ENCODE measurements at regions of chr2 and their contacts with region 1.

Region 1: DNA sequence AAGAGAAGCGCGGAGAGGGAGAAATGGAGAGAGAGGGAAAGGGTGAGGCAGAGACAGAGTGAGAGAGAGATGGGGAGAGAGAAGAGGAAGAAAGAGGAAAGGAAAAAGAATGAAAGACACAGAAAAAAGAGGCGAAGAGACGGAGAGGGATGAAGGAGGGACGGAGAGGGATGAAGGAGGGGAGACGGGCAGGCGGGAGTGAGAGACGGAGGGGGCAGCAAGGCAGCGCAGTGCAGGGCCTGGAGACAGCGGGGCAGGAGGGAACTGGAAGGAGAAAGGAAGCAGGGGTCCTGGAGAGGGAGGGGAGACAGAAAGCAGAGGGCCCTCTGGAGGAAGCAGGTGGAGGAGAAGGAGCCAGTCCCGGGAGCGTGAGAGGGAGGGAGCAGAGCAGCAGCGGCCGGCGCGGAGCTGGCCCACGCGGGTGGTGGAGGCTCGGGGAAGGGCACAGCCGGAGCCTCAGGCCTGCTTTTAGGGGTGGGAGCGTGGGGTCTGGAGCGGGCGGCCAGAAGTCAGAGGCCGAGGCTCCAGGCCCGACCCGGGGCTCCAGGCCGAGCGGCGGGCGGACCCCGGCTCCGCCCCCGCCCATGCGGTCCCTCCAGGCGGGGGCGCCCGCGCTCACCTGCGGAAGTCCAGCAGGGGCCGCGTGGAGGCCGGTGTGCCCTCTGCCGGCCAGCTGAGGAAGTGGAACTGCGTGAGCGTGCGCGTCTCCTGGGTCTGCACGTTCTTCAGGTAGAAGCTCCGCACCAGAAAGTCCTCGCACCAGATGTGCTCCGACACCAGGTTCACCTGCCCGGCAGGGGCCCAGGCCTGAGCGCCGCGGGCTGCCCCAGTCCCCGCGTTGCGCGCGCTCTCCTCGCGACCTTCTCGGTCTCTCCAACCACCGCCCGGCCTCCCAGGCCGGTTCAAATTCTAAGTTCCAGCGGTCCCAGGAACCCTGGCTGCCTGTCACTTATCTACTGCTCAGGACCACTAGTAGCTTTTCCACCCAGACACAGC is 14.5 kb downstream of the PTPRN start:
- DNase-seq: no peak
- H3K4me3 ChIP-seq: peak overlapping the region; percentile 59
- CTCF ChIP-seq: peak; percentile 96

Region 2: DNA sequence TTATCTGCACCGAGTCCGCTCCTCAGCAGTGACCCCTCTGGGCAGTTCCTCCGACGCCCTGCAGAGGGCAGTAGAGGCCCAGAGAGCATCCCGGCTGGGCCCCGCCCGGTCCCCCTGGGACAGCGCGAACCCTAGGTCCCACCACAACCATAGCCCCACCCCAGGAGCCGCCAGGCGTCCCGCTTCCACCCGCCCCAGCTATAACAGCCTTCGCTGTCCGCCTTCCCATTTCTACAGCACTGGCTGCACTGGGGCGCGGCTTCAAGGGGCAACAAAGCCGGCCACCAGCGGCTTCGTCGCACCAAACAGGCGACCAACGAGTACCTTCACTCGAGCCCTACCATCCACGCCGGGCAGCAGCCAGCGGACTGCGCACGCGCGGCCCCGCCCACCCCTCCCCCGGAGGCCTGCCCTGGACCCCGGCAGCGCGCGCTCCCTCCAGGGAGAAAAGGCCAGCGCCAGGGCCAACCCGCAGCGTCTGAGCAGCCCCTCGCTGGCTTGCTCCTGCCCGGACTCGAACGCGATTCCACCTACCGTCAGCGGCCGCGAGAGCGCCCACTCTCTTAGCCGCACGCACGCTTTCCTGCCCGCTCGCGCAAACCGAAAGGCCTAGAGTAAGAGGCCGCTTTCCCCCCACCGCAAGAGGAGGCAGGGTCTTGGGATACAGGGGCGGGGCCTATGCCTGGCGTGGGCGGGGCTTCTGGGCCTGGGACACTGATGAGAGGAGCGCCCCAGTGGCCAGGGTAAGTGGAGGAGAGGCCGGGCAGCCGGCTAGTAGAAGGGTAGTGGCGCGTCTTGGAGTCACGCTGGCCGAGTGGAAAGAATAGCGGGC is 134.3 kb before region 1 on chr2 and contains the start of gene NHEJ1:
- CTCF ChIA-PET with region 1: interaction called, 315 read pairs
- POLR2A ChIA-PET with region 1: interaction called, 3 read pairs
- DNase-seq: no peak
- H3K4me3 ChIP-seq: peak within 1 kb of the TSS; percentile 87
- CTCF ChIP-seq: peak; percentile 96

Region 3: GRCh38 chr2:219218732-219219701 is 75.6 kb before region 1 on chr2 and contains the start of gene ABCB6:
- CTCF ChIA-PET with region 1: interaction called, 40 read pairs
- POLR2A ChIA-PET with region 1: no interaction called
- DNase-seq: no peak
- H3K4me3 ChIP-seq: peak within 1 kb of the TSS; percentile 69
- CTCF ChIP-seq: no peak

Region 4: DNA sequence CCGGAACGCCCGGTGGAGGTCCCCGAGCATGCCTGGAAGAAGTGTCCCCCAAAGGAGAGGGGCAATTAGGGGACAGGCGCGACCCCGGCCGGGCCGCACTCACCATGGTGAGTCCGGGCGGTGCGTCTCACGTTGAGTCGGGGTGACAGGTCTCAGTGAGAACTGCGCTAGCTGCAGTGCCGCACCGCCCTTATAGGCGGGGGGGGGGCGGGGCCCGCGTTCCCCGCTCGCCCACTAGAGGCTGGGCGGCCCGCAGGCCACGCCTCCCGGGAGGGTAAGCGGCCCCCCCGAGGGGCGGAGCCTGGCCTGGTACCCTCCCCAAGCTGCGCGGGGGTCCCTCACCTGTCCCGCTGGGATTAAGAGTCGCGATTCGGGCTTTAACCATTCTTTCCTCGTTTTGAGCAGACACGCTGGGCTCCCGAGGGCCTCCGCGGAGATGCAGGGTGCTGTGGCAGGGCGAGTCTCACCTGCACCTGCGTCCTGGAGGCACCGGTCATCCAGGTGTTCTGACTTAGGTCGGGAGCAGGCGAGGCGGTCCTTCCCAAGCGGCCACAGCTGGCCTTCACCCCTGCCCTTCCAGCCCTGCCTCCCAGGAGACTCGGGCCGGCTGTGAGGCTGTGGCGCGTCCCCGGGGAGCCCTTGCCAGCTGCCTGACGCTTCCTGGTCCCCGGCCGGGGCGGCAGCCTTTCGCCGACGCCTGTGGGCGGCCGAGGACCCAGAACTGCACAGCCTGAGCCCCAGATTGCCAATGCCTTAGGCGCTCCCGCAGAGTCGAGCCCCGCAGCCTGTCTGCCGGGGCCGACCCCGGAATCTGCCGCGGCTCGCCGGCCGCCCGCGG is 40.7 kb before region 1 on chr2 and contains the start of gene TUBA4A:
- CTCF ChIA-PET with region 1: interaction called, 35 read pairs
- POLR2A ChIA-PET with region 1: interaction called, 3 read pairs
- DNase-seq: no peak
- H3K4me3 ChIP-seq: peak within 1 kb of the TSS; percentile 57
- CTCF ChIP-seq: no peak

Region 5: GRCh38 chr2:219308142-219309093 is 13.8 kb after region 1 on chr2:
- CTCF ChIA-PET with region 1: interaction called, 145 read pairs
- POLR2A ChIA-PET with region 1: no interaction called
- DNase-seq: no peak
- H3K4me3 ChIP-seq: peak overlapping the region; percentile 49
- CTCF ChIP-seq: no peak

Region 6: GRCh38 chr2:219352448-219353023 is 57.9 kb after region 1 on chr2:
- CTCF ChIA-PET with region 1: interaction called, 21 read pairs
- POLR2A ChIA-PET with region 1: no interaction called
- DNase-seq: no peak
- H3K4me3 ChIP-seq: no peak overlapping the region
- CTCF ChIP-seq: peak; percentile 62

Measured in AG04449 (cell line).